Esophagus muscularis mucosa (tissue), 4 donors: ENCODE measurements at regions of chr2 and their contacts with region 1.

Region 1: DNA sequence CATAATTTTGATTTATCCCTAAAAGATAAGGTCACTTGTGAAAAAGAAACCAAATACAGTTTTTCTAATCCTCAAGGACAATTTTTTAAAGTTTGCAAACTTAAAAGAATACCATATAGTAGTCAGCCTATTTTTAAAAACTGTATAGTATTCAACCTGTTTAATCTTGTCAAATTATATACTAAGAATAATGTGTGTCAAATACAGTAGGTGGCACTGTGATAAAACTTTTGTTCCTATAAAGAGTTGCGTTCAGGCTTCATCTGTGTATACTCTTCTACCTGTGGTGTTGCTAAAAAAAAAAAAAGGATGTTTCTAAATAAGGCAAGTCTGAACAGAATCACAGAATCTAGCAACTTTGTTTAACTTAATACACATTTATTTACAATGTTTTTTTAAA is 68.6 kb downstream of the CCDC138 start:
- DNase-seq: no peak
- H3K4me3 ChIP-seq: no peak overlapping the region
- H3K27ac ChIP-seq: no peak overlapping the region
- H3K4me1 ChIP-seq: no peaks in the 10 kb centered on the region
- H3K27me3 ChIP-seq: no peaks in the 10 kb centered on the region
- CTCF ChIP-seq: peak in 2 of 3 experiments; percentile 15 to 25
- EP300 ChIP-seq: no peak
- POLR2A ChIP-seq: no peak

Region 2: GRCh38 chr2:107719836-107720235 is 1135.4 kb before region 1 on chr2:
- intact Hi-C with region 1: no loop called
- DNase-seq: no peak
- H3K4me3 ChIP-seq: no peak overlapping the region
- H3K27ac ChIP-seq: no peak overlapping the region
- H3K4me1 ChIP-seq: no peaks in the 10 kb centered on the region
- H3K27me3 ChIP-seq: no peaks in the 10 kb centered on the region
- CTCF ChIP-seq: no peak
- EP300 ChIP-seq: no peak
- POLR2A ChIP-seq: no peak

Region 3: DNA sequence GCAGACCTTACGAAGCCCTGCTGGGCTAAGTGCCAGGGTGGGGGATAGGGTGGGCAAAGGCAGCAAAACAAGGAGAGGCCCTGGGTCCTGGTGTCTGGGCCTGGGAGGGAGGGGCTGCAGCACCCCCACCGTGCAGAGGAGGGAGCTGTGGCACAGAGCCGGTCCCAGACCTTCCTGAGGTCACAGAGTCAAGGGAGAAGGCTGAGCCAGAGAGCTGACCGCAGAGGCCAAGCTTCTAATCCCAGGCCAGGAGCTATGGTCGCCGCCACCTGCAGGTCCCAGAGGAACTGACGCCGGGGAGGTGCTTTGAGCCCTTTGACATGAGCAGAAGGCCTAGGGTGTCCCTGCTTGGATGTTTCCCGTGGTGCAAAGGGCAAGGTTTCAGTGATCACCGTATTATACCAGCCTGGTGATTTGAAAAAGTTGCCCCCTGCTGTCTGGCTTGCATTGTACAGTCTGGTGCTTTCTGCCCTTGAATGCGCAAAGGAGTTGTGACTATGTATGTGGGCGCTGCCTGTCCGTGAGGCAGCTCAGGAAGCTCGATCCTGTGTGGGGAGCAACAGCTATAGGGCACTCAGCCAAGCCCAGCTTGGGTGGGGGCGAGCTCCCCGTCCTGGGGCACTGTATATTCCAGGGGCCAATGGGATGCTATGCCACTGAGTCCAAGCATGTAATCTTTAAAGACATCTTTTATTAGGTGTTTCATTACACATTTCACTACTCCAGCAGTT is 89.6 kb after region 1 on chr2:
- intact Hi-C with region 1: loop called (anchors 10 kb)
- DNase-seq: no peak
- H3K4me3 ChIP-seq: no peak overlapping the region
- H3K27ac ChIP-seq: no peak overlapping the region
- H3K4me1 ChIP-seq: peaks cover 0 to 16% (median 4%) of the 10 kb centered on the region in 4 donors
- H3K27me3 ChIP-seq: no peaks in the 10 kb centered on the region
- CTCF ChIP-seq: peak in 1 of 3 experiments; percentile 24
- EP300 ChIP-seq: no peak
- POLR2A ChIP-seq: no peak